Caco-2 (cell line): ENCODE measurements at regions of chr3 and their contacts with region 1.

Region 1: DNA sequence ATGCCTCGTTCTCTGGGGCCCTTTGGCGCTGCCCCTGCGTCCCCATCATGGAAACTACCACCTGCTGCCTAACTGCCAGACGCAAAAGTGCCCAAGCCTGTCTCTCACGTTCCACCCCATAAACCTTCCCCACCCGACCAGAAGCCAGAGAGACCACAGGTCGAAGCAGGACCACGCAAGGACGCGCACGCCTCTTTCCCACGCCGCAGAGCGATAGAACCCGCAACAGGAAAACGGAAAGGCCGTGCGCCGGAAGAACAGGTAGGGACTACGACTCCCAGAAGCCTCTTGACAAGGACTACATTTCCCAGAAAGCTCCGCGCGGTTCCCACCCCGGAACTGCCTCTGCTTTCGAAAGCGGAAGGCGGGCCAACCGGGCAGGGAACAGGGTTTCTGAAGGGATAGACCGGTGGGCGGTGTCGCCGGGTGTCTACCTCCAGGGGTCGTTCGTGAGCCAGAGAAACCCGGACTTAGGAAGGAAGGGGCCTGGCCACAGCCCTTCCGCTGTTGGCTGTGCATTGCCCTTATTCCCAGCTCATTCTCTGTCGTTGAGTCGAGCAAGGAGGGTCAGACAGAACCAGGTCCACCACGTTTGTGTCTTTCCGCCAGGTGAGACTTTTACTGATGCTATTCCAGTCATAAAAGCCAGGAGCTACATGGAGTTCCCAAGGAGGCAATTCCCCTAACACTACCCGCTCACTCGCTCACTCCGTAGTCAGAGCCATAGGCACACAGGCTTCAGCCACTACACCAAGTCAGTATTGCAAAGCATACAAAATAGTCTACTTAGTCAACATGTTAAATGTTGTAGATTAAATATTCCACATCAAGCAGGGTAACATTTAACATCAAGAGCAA is 56.6 kb upstream of the ZBTB38 start:
- DNase-seq: peak; percentile 98 to 99
- H3K4me3 ChIP-seq: peak overlapping the region; percentile 82
- H3K4me3 Mint-ChIP-seq: peak overlapping the region; percentile 92
- H3K27ac Mint-ChIP-seq: peak overlapping the region; percentile 89
- H3K4me1 ChIP-seq: peaks cover 9% of the 10 kb centered on the region
- H3K4me1 Mint-ChIP-seq: peaks cover 5% of the 10 kb centered on the region
- H3K27me3 ChIP-seq: no peaks in the 10 kb centered on the region
- H3K27me3 Mint-ChIP-seq: no peaks in the 10 kb centered on the region
- CTCF ChIP-seq: peak; percentile 82 to 84

Region 2: DNA sequence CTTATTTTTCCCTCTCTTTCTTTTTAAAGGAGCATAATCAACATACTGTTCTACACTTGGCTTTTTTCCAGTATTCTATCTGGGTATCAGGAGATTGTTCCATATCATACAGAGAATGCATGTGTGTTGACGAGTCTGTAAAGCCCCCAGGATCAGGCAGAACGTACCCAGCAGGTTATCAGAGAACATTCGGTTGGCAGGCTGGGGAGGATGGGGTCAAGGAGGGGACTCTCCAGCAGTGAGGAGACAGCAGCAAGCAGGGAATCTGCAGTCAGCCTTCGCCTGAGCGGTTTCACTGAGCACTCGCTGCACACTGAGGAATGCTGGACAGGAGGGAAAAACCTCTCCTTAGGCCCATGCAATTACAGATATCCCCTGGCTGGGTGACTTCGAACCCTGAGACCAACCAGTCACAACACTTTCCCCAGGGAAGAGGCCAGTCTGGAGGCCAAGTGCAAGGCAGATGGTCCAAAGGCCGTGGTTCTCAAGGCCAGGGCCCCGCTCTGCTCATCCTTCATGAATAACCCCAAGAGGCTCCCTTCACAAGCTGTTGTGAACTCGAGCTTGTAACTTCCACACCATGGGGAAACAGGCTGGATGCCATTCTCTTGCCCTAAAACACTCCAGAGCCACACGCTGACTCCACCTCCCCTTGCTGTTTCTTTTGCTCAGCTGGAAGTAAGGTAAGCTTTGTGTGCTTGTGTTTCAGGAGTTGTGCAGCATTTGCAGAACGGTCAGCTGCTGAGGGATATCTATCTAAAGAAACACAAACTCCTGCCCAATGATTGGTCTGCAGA is 20.0 kb before region 1 on chr3:
- CTCF ChIA-PET with region 1: no interaction called
- POLR2A ChIA-PET with region 1: no interaction called
- intact Hi-C with region 1: no loop called
- DNase-seq: no peak
- H3K4me3 ChIP-seq: no peak overlapping the region
- H3K4me3 Mint-ChIP-seq: no peak overlapping the region
- H3K27ac Mint-ChIP-seq: no peak overlapping the region
- H3K4me1 ChIP-seq: no peaks in the 10 kb centered on the region
- H3K4me1 Mint-ChIP-seq: peaks cover 19% of the 10 kb centered on the region
- H3K27me3 ChIP-seq: no peaks in the 10 kb centered on the region
- H3K27me3 Mint-ChIP-seq: no peaks in the 10 kb centered on the region
- CTCF ChIP-seq: no peak

Region 3: DNA sequence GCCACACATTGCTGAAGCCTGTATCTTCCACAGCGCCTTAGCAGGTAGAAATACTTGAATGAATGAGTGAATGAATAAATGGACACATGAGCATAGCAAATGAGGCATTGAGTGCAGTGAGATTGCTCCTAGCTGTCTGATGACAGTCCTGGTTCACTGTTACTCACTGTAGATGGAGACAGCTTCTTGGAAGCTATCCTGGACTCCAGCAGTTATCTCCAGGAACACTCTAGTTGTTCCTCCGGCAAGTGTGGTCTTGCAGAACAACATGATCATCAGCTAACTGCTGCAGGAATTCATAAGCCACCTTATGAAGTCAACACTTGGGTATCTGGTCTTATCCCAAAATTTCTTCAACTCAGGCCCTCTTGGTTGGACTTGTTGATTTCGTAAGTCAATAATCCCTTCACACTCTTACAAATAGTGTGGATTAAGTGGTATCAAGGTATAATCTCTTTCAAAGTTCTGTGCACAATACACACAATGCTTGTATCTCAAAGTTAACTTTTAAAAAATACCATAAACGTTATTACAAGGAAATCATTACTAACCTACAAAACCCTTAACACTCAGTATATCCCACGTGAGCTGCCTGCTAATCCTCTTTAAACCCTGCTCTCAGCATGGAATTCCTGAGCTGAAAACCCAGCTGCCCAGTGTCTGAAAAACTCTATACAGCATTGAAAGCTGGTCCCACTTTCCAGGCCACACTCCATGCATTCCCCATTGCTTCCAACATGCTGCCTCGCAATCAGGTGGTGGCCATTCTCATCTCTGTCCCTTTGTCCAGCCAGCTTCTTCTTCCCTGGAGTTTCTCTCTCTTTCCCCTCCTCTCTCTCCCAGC is 42.1 kb after region 1 on chr3:
- CTCF ChIA-PET with region 1: interaction called, 10 read pairs
- POLR2A ChIA-PET with region 1: no interaction called
- intact Hi-C with region 1: no loop called
- DNase-seq: no peak
- H3K4me3 ChIP-seq: no peak overlapping the region
- H3K4me3 Mint-ChIP-seq: no peak overlapping the region
- H3K27ac Mint-ChIP-seq: no peak overlapping the region
- H3K4me1 ChIP-seq: no peaks in the 10 kb centered on the region; the same call in 1 of the 2 replicates
- H3K4me1 Mint-ChIP-seq: peaks cover 3% of the 10 kb centered on the region
- H3K27me3 ChIP-seq: no peaks in the 10 kb centered on the region
- H3K27me3 Mint-ChIP-seq: peaks cover 3% of the 10 kb centered on the region
- CTCF ChIP-seq: no peak

Region 4: GRCh38 chr3:141402476-141403171 is 90.9 kb after region 1 on chr3:
- CTCF ChIA-PET with region 1: interaction called, 3 read pairs
- POLR2A ChIA-PET with region 1: no interaction called
- intact Hi-C with region 1: loop called (anchors 1 kb)
- DNase-seq: peak; percentile 59 to 70
- H3K4me3 ChIP-seq: peak overlapping the region; percentile 70
- H3K4me3 Mint-ChIP-seq: peak overlapping the region; percentile 67
- H3K27ac Mint-ChIP-seq: no peak overlapping the region
- H3K4me1 ChIP-seq: peaks cover 29% of the 10 kb centered on the region
- H3K4me1 Mint-ChIP-seq: peaks cover 17% of the 10 kb centered on the region
- H3K27me3 ChIP-seq: no peaks in the 10 kb centered on the region
- H3K27me3 Mint-ChIP-seq: no peaks in the 10 kb centered on the region
- CTCF ChIP-seq: no peak

Region 5: DNA sequence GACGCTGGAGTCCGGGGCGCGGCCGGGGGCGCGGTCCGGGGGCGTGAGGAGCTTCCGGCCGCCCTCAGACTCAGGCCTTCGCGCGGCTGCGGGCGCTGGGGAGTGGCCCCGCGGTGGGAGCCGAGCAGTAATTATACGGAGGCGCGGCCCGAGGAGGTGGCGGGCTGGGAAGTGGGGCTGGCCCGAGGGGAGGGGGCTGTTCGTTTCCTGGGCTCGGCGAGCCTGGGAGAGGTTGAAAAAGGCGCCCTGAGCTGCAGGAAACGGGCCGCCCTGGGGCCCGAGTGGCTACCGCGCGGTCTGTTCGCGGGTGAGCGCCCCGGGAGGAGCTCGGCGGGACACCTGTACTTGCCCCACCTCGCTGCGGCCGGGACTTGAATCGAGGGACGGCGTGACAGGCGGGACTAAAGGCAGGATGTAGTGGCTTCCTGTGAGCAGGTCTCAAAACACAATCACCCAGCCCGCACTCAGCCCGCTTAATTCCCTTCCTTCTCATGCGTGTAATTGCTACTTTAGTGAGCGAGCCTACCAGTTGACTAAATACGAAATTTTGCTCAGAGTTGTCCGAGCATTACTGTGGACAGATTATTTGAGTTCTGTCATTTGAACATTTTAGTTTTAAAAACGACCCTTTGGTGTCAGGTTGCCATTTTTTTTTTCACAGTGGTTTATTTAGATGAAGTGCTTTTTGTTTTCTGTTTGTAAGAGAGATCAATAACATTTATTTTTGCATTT is 176.0 kb after region 1 on chr3:
- CTCF ChIA-PET with region 1: no interaction called
- POLR2A ChIA-PET with region 1: no interaction called
- intact Hi-C with region 1: loop called (anchors 1 kb)
- DNase-seq: peak; percentile 84 to 86
- H3K4me3 ChIP-seq: peak overlapping the region; percentile 82
- H3K4me3 Mint-ChIP-seq: peak overlapping the region; percentile 90
- H3K27ac Mint-ChIP-seq: peak overlapping the region; percentile 74
- H3K4me1 ChIP-seq: peaks cover 34% of the 10 kb centered on the region
- H3K4me1 Mint-ChIP-seq: peaks cover 59% of the 10 kb centered on the region
- H3K27me3 ChIP-seq: no peaks in the 10 kb centered on the region
- H3K27me3 Mint-ChIP-seq: no peaks in the 10 kb centered on the region
- CTCF ChIP-seq: peak in 1 of 2 experiments; percentile 3